ENCODE measurements at regions of chr17 and their contacts with region 1.

Region 1: DNA sequence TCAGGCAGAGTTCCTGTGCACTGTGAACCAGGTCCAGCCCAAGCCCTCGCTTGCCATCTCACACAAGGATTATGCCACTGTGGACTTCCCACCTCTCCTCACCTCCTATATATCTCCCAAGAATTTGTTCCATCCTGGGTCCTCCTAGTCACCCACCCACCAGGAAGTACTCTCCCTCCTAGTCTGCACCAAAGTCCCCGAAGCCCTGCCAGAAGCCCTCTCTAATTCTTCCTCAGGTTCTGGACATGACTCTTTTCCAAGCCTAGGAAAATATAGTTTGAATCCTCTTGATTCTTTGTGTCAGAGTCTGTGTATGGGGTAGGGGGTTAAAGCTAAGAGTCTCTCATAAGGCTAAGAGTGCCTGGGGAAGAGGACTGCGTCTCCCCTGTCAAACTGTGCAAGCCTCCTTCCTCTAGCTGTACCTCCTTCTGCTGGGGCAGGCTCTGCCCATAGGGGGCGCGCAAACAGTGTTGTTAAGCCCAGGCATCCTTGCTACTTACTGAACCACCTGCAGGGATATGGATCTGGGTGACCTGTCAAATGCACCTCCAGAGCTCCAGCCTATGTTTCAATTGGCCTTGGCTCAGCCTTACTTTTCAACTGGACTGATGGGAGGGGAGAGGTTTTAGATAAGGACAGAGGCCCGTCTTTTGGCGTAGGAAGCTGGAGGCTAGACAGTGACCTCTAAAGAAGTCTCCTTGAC is 16.6 kb upstream of the DLX4 start:
- DNase-seq: peak; percentile 87
- H3K4me3 ChIP-seq: peak overlapping the region in 1 of 2 experiments; percentile 1; a peak in 1 of 4 replicates
- H3K27ac ChIP-seq: no peak overlapping the region
- H3K4me1 ChIP-seq: no peaks in the 10 kb centered on the region
- H3K27me3 ChIP-seq: peaks cover 81% of the 10 kb centered on the region
- CTCF ChIP-seq: peak; percentile 99
- EP300 ChIP-seq: no peak
- RAD21 ChIP-seq: peak; percentile 74

Region 2: DNA sequence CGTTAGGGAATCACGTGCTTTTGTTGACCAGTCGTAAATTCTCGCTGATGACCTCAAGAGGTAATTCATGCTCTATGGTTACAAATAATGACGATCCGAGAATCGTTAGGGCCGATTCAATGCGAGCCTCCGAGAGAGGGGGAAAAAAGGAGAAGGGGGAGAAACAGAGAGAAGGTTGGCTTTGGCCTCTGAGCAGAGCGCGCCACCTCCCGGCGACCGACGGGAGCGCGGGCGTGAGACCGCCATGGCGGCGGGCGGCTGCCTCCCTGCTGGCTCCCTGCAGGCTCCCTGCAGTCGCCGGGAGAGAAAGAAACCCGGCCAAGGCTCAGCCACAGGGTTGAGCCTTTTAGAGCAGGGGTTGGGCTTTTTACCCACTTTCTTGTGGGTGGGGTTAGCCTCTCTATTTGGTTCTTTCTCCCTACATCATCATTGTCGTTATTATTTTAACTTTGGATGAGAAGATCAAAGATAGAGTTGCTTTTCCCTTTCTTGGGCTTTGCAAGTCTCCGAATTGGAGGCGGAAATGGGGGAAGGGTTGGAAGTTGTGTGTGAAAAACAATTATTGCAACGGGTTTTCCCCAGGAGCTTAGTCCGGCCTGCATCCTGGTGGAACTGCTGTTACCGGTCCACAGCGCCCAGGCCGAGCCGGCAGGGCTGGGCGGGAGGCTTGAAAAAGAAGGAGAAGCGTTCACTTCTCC is 1358.4 kb before region 1 on chr17:
- CTCF ChIA-PET with region 1: no interaction called
- POLR2A ChIA-PET with region 1: no interaction called
- DNase-seq: peak; percentile 96
- H3K4me3 ChIP-seq: no peak overlapping the region; a peak in 1 of 4 replicates
- H3K27ac ChIP-seq: no peak overlapping the region
- H3K4me1 ChIP-seq: 0 out of 4 replicates have a peak, but pooled peaks cover 0 to 4% of the 10 kb centered on the region in 2 experiments
- H3K27me3 ChIP-seq: peaks cover 98% of the 10 kb centered on the region
- CTCF ChIP-seq: peak; percentile 97
- EP300 ChIP-seq: no peak
- RAD21 ChIP-seq: peak; percentile 86

Region 3: GRCh38 chr17:49851387-49852291 is 100.7 kb before region 1 on chr17:
- CTCF ChIA-PET with region 1: interaction called, 17 read pairs
- POLR2A ChIA-PET with region 1: no interaction called
- DNase-seq: peak; percentile 92
- H3K4me3 ChIP-seq: peak overlapping the region; percentile 59 to 66
- H3K27ac ChIP-seq: no peak overlapping the region
- H3K4me1 ChIP-seq: peaks cover 4 to 14% of the 10 kb centered on the region in 2 experiments; a peak in 1 of 4 replicates
- H3K27me3 ChIP-seq: peaks cover 10% of the 10 kb centered on the region; the same call in 1 of the 2 replicates
- CTCF ChIP-seq: peak; percentile 90
- EP300 ChIP-seq: no peak
- RAD21 ChIP-seq: peak; percentile 71

Region 4: DNA sequence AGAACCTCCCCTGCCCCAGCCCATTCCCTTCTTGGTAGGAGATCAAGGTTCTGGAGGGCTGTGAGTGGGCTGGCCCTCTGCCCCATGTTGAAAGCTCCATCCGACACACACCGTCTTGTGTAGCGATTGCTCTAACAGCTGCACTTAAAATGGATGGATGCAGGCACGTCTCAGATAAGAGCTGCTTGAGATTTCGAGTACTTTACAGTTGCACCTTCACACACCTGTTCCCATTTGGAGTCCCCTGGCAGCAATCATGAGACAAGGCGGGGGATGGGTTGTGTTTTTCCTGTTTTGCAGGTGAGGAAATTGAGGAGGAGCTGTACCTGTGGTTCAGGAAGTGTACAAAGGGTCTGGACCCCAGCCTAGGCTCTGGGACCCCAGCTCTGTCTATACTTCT is 78.9 kb before region 1 on chr17:
- CTCF ChIA-PET with region 1: interaction called, 17 read pairs
- POLR2A ChIA-PET with region 1: no interaction called
- DNase-seq: no peak
- H3K4me3 ChIP-seq: no peak overlapping the region
- H3K27ac ChIP-seq: no peak overlapping the region
- H3K4me1 ChIP-seq: no peaks in the 10 kb centered on the region
- H3K27me3 ChIP-seq: peaks cover 36% of the 10 kb centered on the region
- CTCF ChIP-seq: no peak
- EP300 ChIP-seq: no peak
- RAD21 ChIP-seq: no peak

Region 5: GRCh38 chr17:49887086-49888028 is 65.0 kb before region 1 on chr17:
- CTCF ChIA-PET with region 1: interaction called, 22 read pairs
- POLR2A ChIA-PET with region 1: no interaction called
- DNase-seq: no peak
- H3K4me3 ChIP-seq: no peak overlapping the region
- H3K27ac ChIP-seq: no peak overlapping the region
- H3K4me1 ChIP-seq: peaks cover 0 to 6% of the 10 kb centered on the region in 2 experiments; a peak in 1 of 4 replicates
- H3K27me3 ChIP-seq: peaks cover 83% of the 10 kb centered on the region
- CTCF ChIP-seq: no peak
- EP300 ChIP-seq: no peak
- RAD21 ChIP-seq: no peak

Region 6: GRCh38 chr17:49910094-49910857 is 42.1 kb before region 1 on chr17:
- CTCF ChIA-PET with region 1: interaction called, 38 read pairs
- POLR2A ChIA-PET with region 1: no interaction called
- DNase-seq: peak; percentile 73
- H3K4me3 ChIP-seq: peak overlapping the region in 1 of 2 experiments; percentile 15; a peak in 1 of 4 replicates
- H3K27ac ChIP-seq: no peak overlapping the region
- H3K4me1 ChIP-seq: peaks cover 0 to 3% of the 10 kb centered on the region in 2 experiments; a peak in 1 of 4 replicates
- H3K27me3 ChIP-seq: peaks cover 93% of the 10 kb centered on the region
- CTCF ChIP-seq: no peak
- EP300 ChIP-seq: no peak
- RAD21 ChIP-seq: no peak

Region 7: GRCh38 chr17:49926886-49927285 is 25.5 kb before region 1 on chr17:
- CTCF ChIA-PET with region 1: interaction called, 258 read pairs
- POLR2A ChIA-PET with region 1: no interaction called
- DNase-seq: no peak
- H3K4me3 ChIP-seq: no peak overlapping the region
- H3K27ac ChIP-seq: no peak overlapping the region
- H3K4me1 ChIP-seq: peaks cover 0 to 1% of the 10 kb centered on the region in 2 experiments; a peak in 1 of 4 replicates
- H3K27me3 ChIP-seq: peaks cover 96% of the 10 kb centered on the region
- CTCF ChIP-seq: no peak
- EP300 ChIP-seq: no peak
- RAD21 ChIP-seq: no peak

Region 8: GRCh38 chr17:49980703-49981197 is 28.4 kb after region 1 on chr17:
- CTCF ChIA-PET with region 1: interaction called, 1,225 read pairs
- POLR2A ChIA-PET with region 1: no interaction called
- DNase-seq: peak; percentile 42
- H3K4me3 ChIP-seq: no peak overlapping the region
- H3K27ac ChIP-seq: no peak overlapping the region
- H3K4me1 ChIP-seq: no peaks in the 10 kb centered on the region
- H3K27me3 ChIP-seq: peaks cover 66% of the 10 kb centered on the region
- CTCF ChIP-seq: no peak
- EP300 ChIP-seq: no peak
- RAD21 ChIP-seq: no peak

Region 9: GRCh38 chr17:50051082-50051576 is 98.8 kb after region 1 on chr17:
- CTCF ChIA-PET with region 1: no interaction called
- POLR2A ChIA-PET with region 1: no interaction called
- DNase-seq: no peak
- H3K4me3 ChIP-seq: no peak overlapping the region
- H3K27ac ChIP-seq: peak overlapping the region; percentile 96 to 100; a peak in 3 of 4 replicates
- H3K4me1 ChIP-seq: peaks cover 47 to 89% of the 10 kb centered on the region in 2 experiments
- H3K27me3 ChIP-seq: no peaks in the 10 kb centered on the region
- CTCF ChIP-seq: no peak
- EP300 ChIP-seq: peak in 1 of 2 experiments; percentile 99; a peak in 2 of 4 replicates
- RAD21 ChIP-seq: no peak

Region 10: GRCh38 chr17:50139950-50140871 is 187.9 kb after region 1 on chr17:
- CTCF ChIA-PET with region 1: no interaction called
- POLR2A ChIA-PET with region 1: no interaction called
- DNase-seq: peak; percentile 98
- H3K4me3 ChIP-seq: no peak overlapping the region; a peak in 1 of 4 replicates
- H3K27ac ChIP-seq: peak overlapping the region in 1 of 2 experiments; percentile 40; a peak in 2 of 4 replicates
- H3K4me1 ChIP-seq: peaks cover 0 to 7% of the 10 kb centered on the region in 2 experiments; a peak in 1 of 4 replicates
- H3K27me3 ChIP-seq: no peaks in the 10 kb centered on the region
- CTCF ChIP-seq: peak; percentile 96
- EP300 ChIP-seq: peak in 1 of 2 experiments; percentile 27; a peak in 1 of 4 replicates
- RAD21 ChIP-seq: peak; percentile 82

Measured in SK-N-SH (cell line).